CD4-positive, alpha-beta memory T cell (primary cell): ENCODE measurements at regions of chr1 and their contacts with region 1.

Region 1: GRCh38 chr1:160558660-160559380 is 20.5 kb downstream of the CD84 start:
- DNase-seq: no peak
- H3K4me3 ChIP-seq: peak overlapping the region; percentile 21 to 42
- H3K4me3 Mint-ChIP-seq: peak overlapping the region; percentile 78 to 92 (median 82)
- H3K27ac ChIP-seq: peak overlapping the region; percentile 54
- H3K27ac Mint-ChIP-seq: peak overlapping the region; percentile 84 to 98 (median 93)
- H3K4me1 ChIP-seq: peaks cover 79% of the 10 kb centered on the region
- H3K4me1 Mint-ChIP-seq: peaks cover 56 to 80% (median 66%) of the 10 kb centered on the region in 4 donors
- H3K27me3 ChIP-seq: no peaks in the 10 kb centered on the region
- H3K27me3 Mint-ChIP-seq: no peaks in the 10 kb centered on the region

Region 2: GRCh38 chr1:160575112-160575664 is 16.4 kb after region 1 on chr1:
- CTCF ChIA-PET with region 1: interaction called, 35 read pairs
- POLR2A ChIA-PET with region 1: interaction called, 639 read pairs
- intact Hi-C with region 1: loop called (anchors 2 kb)
- DNase-seq: peak in 2 of 5 donors; percentile 26 to 49
- H3K4me3 ChIP-seq: peak overlapping the region; percentile 15 to 80
- H3K4me3 Mint-ChIP-seq: peak overlapping the region; percentile 83 to 98 (median 94)
- H3K27ac ChIP-seq: peak overlapping the region; percentile 68
- H3K27ac Mint-ChIP-seq: peak overlapping the region; percentile 89 to 95 (median 92)
- H3K4me1 ChIP-seq: peaks cover 83% of the 10 kb centered on the region
- H3K4me1 Mint-ChIP-seq: peaks cover 64 to 94% (median 73%) of the 10 kb centered on the region in 4 donors
- H3K27me3 ChIP-seq: no peaks in the 10 kb centered on the region
- H3K27me3 Mint-ChIP-seq: no peaks in the 10 kb centered on the region